ENCODE measurements at regions of chr14 and their contacts with region 1.

Region 1: GRCh38 chr14:92004062-92004461 is 35.8 kb downstream of the TRIP11 start:
- DNase-seq: no peak
- ATAC-seq: no peak

Region 2: DNA sequence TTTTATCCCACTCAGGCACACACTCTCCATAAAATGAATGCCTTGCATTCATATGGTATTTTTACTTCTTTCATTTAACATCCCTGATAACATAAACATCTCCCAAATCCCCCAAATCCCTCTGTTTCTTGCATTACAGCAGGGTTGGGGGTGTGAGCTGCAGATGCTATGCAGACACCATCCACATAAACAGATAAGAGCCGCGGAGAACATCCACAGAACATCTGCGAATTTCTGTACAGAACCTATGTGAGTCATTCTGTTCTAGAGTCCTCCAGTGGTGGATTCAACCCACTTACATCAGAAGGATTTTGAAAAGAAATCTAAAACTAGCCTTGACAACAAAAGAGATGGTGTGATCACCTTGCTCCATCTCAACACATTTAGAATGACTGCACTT is 76.9 kb before region 1 on chr14:
- intact Hi-C with region 1: loop called (anchors 2 kb)
- DNase-seq: no peak
- ATAC-seq: no peak

Region 3: DNA sequence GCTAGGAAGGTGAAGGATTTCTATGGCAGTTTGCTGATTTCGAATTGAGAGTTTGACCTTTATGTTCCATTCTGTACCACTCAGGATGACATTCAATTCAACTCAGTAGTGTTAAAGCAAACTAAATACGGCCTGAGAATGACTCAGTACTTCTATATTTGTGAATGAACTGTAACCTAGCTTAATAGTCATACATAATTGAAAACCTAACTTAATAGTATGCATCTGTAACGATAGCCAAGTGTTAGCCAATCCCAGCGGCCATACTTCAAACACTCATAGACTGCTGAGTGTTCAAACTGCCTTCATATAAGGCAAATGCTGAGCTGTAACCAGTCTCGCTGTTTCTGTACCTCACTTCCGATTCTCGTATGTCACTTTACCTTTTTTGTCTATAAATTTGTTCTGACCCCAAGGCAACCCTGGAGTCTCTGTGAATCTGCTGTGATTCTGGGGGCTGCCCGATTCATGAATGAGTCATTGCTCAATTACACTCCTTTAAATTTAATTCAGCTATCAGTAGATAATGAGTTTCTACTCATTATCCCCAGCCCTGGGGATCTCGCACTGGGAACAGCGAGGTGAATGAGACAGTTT is 220.4 kb after region 1 on chr14:
- intact Hi-C with region 1: no loop called
- DNase-seq: no peak
- ATAC-seq: no peak

Region 4: DNA sequence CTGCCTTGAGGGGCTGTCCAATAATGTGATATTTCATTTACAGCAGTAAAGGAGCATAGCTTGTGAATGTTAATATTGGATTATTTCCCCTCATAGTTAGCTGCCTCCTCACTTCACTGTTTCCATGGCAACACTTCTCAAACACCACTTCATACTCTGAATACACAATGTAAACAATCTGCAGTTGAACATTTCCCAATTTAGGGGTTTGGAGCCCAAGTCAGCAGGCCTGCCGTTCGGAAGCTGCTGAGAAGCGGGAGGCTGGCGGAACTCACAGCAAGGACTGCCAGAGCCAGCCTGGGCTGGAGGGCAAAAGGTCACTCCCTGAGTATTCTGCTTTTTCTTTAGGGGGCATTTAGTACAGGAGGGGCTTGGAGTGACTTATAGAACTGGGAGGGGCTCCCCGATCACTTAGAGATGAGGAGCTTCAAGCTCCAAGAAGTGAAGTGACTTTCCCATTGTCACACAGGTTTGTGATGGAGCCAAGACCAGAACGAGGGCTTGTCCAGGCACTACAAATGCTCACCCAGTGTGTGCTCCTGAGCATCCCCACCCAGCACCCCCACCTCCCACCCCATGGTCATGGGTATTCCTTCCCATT is 306.8 kb after region 1 on chr14:
- intact Hi-C with region 1: no loop called
- DNase-seq: no peak
- ATAC-seq: no peak